ENCODE measurements at regions of chr2 and their contacts with region 1.

Region 1: DNA sequence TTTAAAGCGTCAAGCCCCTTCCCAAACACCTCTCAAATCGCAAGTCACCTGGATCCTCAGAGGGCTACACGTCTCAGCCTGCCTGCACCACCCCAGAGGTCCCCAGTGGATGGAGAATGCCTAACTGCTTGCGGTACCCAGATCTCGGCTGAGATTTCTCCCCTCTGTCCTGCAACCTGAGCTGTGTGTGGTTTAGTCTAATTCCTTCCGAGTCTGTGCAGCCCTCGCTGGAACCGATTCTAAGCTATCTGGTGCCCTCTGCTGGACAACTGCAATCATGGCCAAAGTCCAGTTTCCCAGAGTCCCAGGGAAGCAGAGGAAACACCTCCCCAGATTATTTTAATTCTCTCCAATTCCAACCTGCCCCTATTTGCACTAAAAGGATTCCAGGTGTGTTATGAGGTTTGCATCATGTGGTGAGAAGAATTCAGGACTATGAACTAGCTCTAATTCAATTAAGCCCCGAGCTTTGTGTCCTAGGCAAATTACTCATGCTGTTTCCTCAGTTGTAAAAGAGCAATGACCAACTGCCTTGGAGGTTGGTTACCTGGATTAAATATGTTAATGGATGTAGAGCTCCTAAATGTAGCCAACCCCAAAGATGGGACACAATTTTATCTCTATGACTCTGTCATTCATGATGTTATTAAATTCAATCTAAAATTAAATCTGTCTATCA is 276.1 kb upstream of the NCKAP5 start:
- DNase-seq: peak; percentile 9 to 67 (median 49)
- ATAC-seq: no peak
- H3K4me3 ChIP-seq: no peak overlapping the region
- H3K4me3 Mint-ChIP-seq: no peak overlapping the region
- H3K27ac ChIP-seq: no peak overlapping the region
- H3K27ac Mint-ChIP-seq: no peak overlapping the region
- H3K4me1 ChIP-seq: no peaks in the 10 kb centered on the region
- H3K4me1 Mint-ChIP-seq: peaks cover 4% of the 10 kb centered on the region
- H3K27me3 ChIP-seq: no peaks in the 10 kb centered on the region
- H3K27me3 Mint-ChIP-seq: peaks cover 7% of the 10 kb centered on the region
- CTCF ChIP-seq: peak; percentile 86

Region 2: GRCh38 chr2:132268932-132269523 is 1575.3 kb before region 1 on chr2:
- CTCF ChIA-PET with region 1: no interaction called
- POLR2A ChIA-PET with region 1: no interaction called
- intact Hi-C with region 1: loop called in 1 of 2 experiments (anchors 2 kb)
- DNase-seq: no peak
- ATAC-seq: no peak
- H3K4me3 ChIP-seq: no peak overlapping the region
- H3K4me3 Mint-ChIP-seq: no peak overlapping the region
- H3K27ac ChIP-seq: no peak overlapping the region
- H3K27ac Mint-ChIP-seq: no peak overlapping the region
- H3K4me1 ChIP-seq: peaks cover 11% of the 10 kb centered on the region
- H3K4me1 Mint-ChIP-seq: peaks cover 5% of the 10 kb centered on the region
- H3K27me3 ChIP-seq: peaks cover 0 to 3% of the 10 kb centered on the region in 2 experiments
- H3K27me3 Mint-ChIP-seq: peaks cover 5% of the 10 kb centered on the region
- CTCF ChIP-seq: no peak

Region 3: DNA sequence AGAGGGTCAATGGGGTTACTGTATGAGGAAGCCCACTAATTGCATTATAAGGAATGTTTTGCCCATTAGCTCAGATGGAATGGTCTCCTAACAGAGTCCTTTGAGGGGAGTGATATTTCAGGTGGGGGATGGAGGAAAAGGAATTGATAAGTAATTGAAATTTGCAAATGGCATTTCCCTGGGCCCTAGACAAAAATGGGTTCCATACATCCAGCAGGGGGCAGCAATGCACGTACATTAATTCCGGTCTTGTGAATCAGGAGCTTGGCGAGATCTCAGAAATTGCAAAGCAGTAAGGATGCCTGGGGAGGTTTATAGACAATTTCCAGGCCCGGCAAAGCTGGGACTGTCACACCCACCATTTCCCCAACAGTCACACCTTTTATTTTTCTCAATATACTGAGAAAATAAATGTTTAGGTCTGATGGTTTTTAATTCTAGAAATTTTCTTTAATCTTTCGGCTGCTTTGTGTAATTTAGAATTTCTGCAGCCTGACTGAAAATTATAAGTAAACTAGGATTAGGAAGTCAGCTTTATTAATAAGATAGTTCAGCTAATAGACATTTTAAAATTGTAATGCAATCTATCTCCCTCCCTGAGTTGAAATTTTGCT is 1297.2 kb before region 1 on chr2:
- CTCF ChIA-PET with region 1: interaction called, 4 read pairs
- POLR2A ChIA-PET with region 1: no interaction called
- intact Hi-C with region 1: loop called (anchors 2 to 5 kb)
- DNase-seq: peak in 3 of 9 experiments; percentile 4 to 24 (median 15)
- ATAC-seq: no peak
- H3K4me3 ChIP-seq: no peak overlapping the region
- H3K4me3 Mint-ChIP-seq: no peak overlapping the region
- H3K27ac ChIP-seq: no peak overlapping the region
- H3K27ac Mint-ChIP-seq: no peak overlapping the region
- H3K4me1 ChIP-seq: no peaks in the 10 kb centered on the region
- H3K4me1 Mint-ChIP-seq: no peaks in the 10 kb centered on the region
- H3K27me3 ChIP-seq: no peaks in the 10 kb centered on the region
- H3K27me3 Mint-ChIP-seq: no peaks in the 10 kb centered on the region
- CTCF ChIP-seq: peak; percentile 25

Region 4: GRCh38 chr2:132896073-132896472 is 948.3 kb before region 1 on chr2:
- CTCF ChIA-PET with region 1: no interaction called
- POLR2A ChIA-PET with region 1: no interaction called
- intact Hi-C with region 1: no loop called
- DNase-seq: no peak
- ATAC-seq: no peak
- H3K4me3 ChIP-seq: no peak overlapping the region
- H3K4me3 Mint-ChIP-seq: no peak overlapping the region
- H3K27ac ChIP-seq: no peak overlapping the region
- H3K27ac Mint-ChIP-seq: no peak overlapping the region
- H3K4me1 ChIP-seq: no peaks in the 10 kb centered on the region
- H3K4me1 Mint-ChIP-seq: no peaks in the 10 kb centered on the region
- H3K27me3 ChIP-seq: no peaks in the 10 kb centered on the region
- H3K27me3 Mint-ChIP-seq: no peaks in the 10 kb centered on the region
- CTCF ChIP-seq: no peak

Region 5: GRCh38 chr2:133791191-133791590 is 53.2 kb before region 1 on chr2:
- CTCF ChIA-PET with region 1: no interaction called
- POLR2A ChIA-PET with region 1: no interaction called
- intact Hi-C with region 1: no loop called
- DNase-seq: no peak
- ATAC-seq: no peak
- H3K4me3 ChIP-seq: no peak overlapping the region
- H3K4me3 Mint-ChIP-seq: no peak overlapping the region
- H3K27ac ChIP-seq: no peak overlapping the region
- H3K27ac Mint-ChIP-seq: no peak overlapping the region
- H3K4me1 ChIP-seq: no peaks in the 10 kb centered on the region
- H3K4me1 Mint-ChIP-seq: no peaks in the 10 kb centered on the region
- H3K27me3 ChIP-seq: no peaks in the 10 kb centered on the region
- H3K27me3 Mint-ChIP-seq: peaks cover 5% of the 10 kb centered on the region
- CTCF ChIP-seq: no peak

Region 6: DNA sequence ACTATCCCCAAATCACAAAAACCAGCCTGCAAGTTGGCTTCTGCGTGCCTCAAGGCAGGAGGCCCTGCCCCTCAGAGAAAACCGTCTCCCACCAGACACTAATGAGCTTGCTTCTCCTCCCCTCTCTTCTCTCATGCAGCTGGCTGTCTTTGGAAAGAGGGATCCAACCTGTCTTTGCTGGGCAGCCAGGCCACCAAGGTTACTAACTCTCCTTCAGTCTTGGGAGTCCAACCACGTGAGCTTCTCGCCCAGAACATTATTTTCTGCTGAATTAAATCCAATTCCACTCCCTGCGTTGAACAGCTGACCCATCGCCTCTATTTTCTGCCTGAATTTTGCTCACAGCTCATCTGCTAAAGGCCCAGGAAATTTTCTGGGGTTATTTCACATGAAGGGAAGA is 15.2 kb after region 1 on chr2:
- CTCF ChIA-PET with region 1: interaction called, 10 read pairs
- POLR2A ChIA-PET with region 1: no interaction called
- intact Hi-C with region 1: no loop called
- DNase-seq: no peak
- ATAC-seq: no peak
- H3K4me3 ChIP-seq: no peak overlapping the region
- H3K4me3 Mint-ChIP-seq: no peak overlapping the region
- H3K27ac ChIP-seq: no peak overlapping the region
- H3K27ac Mint-ChIP-seq: no peak overlapping the region
- H3K4me1 ChIP-seq: no peaks in the 10 kb centered on the region
- H3K4me1 Mint-ChIP-seq: no peaks in the 10 kb centered on the region
- H3K27me3 ChIP-seq: no peaks in the 10 kb centered on the region
- H3K27me3 Mint-ChIP-seq: peaks cover 15% of the 10 kb centered on the region
- CTCF ChIP-seq: no peak

Measured in CD8-positive, alpha-beta T cell (primary cell).